Activated CD4-positive, alpha-beta T cell treated with anti-CD3 and anti-CD28 coated beads for 36 hours (primary cell): ENCODE measurements at regions of chr12 and their contacts with region 1.

Region 1: GRCh38 chr12:123043536-123044001 is 63.1 kb downstream of the ARL6IP4 start:
- DNase-seq: peak; percentile 89
- ATAC-seq: peak; percentile 97
- H3K4me3 Mint-ChIP-seq: no peak overlapping the region
- H3K27ac Mint-ChIP-seq: peak overlapping the region; percentile 47
- H3K4me1 Mint-ChIP-seq: peaks cover 28% of the 10 kb centered on the region
- H3K27me3 Mint-ChIP-seq: no peaks in the 10 kb centered on the region

Region 2: GRCh38 chr12:122790393-122791075 is 253.0 kb before region 1 on chr12:
- CTCF ChIA-PET with region 1: no interaction called
- POLR2A ChIA-PET with region 1: no interaction called
- intact Hi-C with region 1: no loop called
- DNase-seq: no peak
- ATAC-seq: no peak
- H3K4me3 Mint-ChIP-seq: no peak overlapping the region
- H3K27ac Mint-ChIP-seq: no peak overlapping the region
- H3K4me1 Mint-ChIP-seq: no peaks in the 10 kb centered on the region
- H3K27me3 Mint-ChIP-seq: no peaks in the 10 kb centered on the region

Region 3: DNA sequence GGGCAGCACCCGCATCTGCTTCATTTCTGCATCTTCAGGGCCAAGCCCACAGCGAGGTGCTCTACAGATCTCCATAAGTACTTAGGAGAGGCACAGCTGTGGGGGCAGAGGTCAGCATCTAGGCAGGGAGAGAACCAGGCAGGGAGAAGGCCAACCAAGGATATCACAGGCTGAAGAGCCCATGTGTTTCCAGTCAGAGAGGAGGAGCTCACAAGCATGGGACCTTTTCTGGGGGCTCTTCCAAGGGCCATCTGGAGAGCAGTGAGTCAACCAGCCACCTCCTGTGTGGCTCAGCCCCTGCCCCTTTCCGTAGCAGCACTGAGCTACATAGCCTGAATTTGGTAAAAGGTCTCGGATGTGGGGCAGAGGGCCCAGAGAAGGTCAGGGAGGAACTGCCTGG is 15.4 kb after region 1 on chr12:
- CTCF ChIA-PET with region 1: interaction called, 19 read pairs
- POLR2A ChIA-PET with region 1: interaction called, 3 read pairs
- intact Hi-C with region 1: no loop called
- DNase-seq: no peak
- ATAC-seq: no peak
- H3K4me3 Mint-ChIP-seq: no peak overlapping the region
- H3K27ac Mint-ChIP-seq: no peak overlapping the region
- H3K4me1 Mint-ChIP-seq: peaks cover 21% of the 10 kb centered on the region
- H3K27me3 Mint-ChIP-seq: no peaks in the 10 kb centered on the region